Gastrocnemius medialis (tissue), 4 donors: ENCODE measurements at regions of chr21 and their contacts with region 1.

Region 1: GRCh38 chr21:37208056-37208721 is 58.9 kb downstream of the VPS26C start:
- DNase-seq: peak; percentile 83 to 90
- ATAC-seq: peak; percentile 77 to 86
- H3K4me3 ChIP-seq: peak overlapping the region; percentile 33 to 56 (median 49)
- H3K27ac ChIP-seq: peak overlapping the region; percentile 87 to 98 (median 95)
- H3K4me1 ChIP-seq: peaks cover 33 to 44% of the 10 kb centered on the region in 2 donors
- H3K27me3 ChIP-seq: no peaks in the 10 kb centered on the region
- CTCF ChIP-seq: no peak
- POLR2A ChIP-seq: no peak

Region 2: GRCh38 chr21:37166733-37167132 is 41.5 kb before region 1 on chr21:
- in situ Hi-C with region 1: no loop called
- intact Hi-C with region 1: loop called (anchors 5 kb)
- DNase-seq: peak in 1 of 2 donors; percentile 17
- ATAC-seq: peak in 1 of 2 donors; percentile 31
- H3K4me3 ChIP-seq: no peak overlapping the region
- H3K27ac ChIP-seq: peak overlapping the region in 2 of 4 donors; percentile 33 to 37
- H3K4me1 ChIP-seq: peaks cover 5 to 15% of the 10 kb centered on the region in 2 donors
- H3K27me3 ChIP-seq: no peaks in the 10 kb centered on the region
- CTCF ChIP-seq: peak in 3 of 5 experiments; percentile 13 to 52 (median 38)
- POLR2A ChIP-seq: no peak

Region 3: DNA sequence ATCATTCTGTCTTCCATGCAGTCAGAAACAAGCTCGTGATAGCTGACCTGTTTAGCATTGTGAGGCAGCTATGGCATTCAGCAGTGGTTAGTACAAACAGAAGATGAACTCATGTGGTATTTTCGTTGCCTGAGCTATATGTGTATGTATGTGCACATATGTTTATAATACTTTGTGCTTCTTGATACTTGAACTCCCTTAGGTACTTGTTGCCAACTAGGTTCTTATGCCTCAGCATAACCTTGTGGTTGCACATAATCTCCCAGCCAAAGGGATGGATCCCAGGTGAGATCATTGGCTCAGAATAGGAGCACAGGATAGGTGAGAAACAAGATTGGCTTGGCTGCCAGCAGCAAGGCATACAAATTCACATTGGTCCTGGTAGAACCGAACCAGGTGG is 27.1 kb before region 1 on chr21:
- in situ Hi-C with region 1: no loop called
- intact Hi-C with region 1: loop called (anchors 1 kb)
- DNase-seq: peak; percentile 59 to 61
- ATAC-seq: peak; percentile 90 to 98
- H3K4me3 ChIP-seq: peak overlapping the region in 1 of 4 donors; percentile 3
- H3K27ac ChIP-seq: peak overlapping the region; percentile 78 to 85 (median 82)
- H3K4me1 ChIP-seq: no peaks in the 10 kb centered on the region
- H3K27me3 ChIP-seq: no peaks in the 10 kb centered on the region
- CTCF ChIP-seq: no peak
- POLR2A ChIP-seq: no peak

Region 4: DNA sequence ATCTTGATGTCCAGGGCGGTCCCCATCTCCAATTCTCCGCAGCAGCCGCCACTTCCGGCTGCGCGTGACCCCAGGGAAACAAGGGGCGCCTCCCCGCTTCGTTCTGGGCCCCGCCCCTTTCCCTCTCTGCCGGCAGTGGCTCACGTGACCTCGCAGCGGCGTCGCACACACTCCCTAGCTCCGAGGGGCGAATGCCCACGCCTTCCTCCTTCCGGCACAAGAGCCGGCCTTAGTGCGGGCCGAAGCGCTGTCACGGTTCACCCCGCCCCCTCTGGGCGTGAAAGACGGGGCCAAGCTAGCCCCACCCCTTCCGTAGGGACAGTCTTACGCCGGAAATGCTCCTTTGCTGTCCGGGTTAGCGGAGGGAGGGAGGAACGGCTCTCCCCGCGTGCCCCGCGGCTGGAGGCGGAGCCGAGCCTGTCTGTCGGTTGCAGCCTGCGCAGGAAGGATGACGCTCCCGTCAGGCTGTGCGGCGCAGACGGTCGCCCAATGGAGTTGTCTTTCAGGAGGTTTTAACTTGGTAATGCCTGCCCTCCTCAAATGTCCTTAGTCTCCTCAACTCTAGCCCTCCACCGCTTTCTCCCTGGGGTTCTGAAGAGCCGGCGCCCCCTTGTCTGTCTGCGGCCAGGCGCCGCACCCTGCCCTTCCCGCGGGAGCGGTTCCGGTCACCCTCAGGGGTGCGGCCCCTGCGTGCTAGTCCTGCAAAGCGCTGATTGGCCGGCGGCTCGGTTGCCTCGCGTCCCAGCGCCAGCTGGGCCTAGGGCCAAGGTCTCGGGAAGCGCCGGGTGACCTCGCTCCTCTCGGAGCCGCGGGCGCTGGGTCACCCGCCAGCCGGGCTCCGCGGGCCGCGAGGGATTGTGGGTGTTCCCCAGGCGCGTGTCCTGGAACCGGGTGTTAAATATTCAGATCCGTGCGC is 59.3 kb after region 1 on chr21 and contains the start of gene VPS26C:
- in situ Hi-C with region 1: no loop called
- intact Hi-C with region 1: loop called (anchors 1 kb)
- DNase-seq: peak; percentile 97 to 99
- ATAC-seq: peak; percentile 88 to 94
- H3K4me3 ChIP-seq: peak within 1 kb of the TSS; percentile 72 to 90 (median 84)
- H3K27ac ChIP-seq: peak within 1 kb of the TSS; percentile 89 to 97 (median 96)
- H3K4me1 ChIP-seq: peaks cover 37 to 41% of the 10 kb centered on the region in 2 donors
- H3K27me3 ChIP-seq: no peaks in the 10 kb centered on the region
- CTCF ChIP-seq: peak in 1 of 5 experiments; percentile 32
- POLR2A ChIP-seq: peak; percentile 88 to 92
- total RNA-seq, gene VPS26C: 57.6 to 82.7 (median 75.4) TPM

Region 5: DNA sequence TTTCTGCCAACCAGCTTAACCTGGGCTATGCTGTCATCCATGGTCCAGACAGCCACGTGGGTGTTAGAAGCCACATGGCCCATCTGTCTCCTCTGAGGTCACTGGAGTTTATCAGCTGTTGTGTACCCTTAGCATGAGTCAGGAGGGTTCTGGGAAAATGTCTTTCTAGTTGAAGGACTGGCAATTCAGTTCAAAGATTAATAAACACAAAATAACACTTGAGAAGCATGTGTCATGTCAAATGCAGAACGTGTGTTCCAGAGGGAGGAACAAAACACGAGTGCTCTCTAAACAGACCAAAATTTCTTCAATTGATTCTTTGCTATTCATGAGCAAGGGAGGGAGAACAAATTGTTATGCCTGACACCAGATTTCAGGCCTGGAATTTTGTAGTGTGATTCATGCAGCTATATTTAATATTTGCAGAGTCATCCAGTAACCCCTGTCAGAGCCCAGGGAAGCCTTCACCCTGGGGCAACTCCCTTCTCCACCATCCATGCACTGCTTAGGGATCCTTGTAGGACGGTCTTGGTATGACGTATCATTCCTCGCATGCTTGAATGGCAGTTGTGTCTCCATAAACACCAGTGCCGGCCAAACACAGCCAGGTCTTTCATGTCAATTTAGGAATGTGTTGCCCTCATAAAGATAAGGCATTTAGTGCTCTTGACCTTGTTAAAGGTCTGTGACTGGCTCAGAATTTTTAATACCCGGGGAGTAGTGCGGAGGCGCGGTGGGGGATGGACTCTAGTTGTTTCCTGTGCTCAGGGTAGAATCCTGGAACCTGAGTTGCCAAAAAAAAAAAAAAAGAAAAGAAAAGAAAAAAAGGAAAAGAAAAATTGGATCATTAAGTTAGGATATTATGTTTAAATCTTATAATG is 130.7 kb after region 1 on chr21:
- in situ Hi-C with region 1: no loop called
- intact Hi-C with region 1: loop called (anchors 2 kb)
- DNase-seq: peak; percentile 70 to 92
- ATAC-seq: peak; percentile 96 to 97
- H3K4me3 ChIP-seq: peak overlapping the region; percentile 17 to 40 (median 28)
- H3K27ac ChIP-seq: peak overlapping the region; percentile 85 to 92 (median 86)
- H3K4me1 ChIP-seq: peaks cover 10 to 21% of the 10 kb centered on the region in 2 donors
- H3K27me3 ChIP-seq: no peaks in the 10 kb centered on the region
- CTCF ChIP-seq: no peak
- POLR2A ChIP-seq: peak in 1 of 2 donors; percentile 12

Region 6: DNA sequence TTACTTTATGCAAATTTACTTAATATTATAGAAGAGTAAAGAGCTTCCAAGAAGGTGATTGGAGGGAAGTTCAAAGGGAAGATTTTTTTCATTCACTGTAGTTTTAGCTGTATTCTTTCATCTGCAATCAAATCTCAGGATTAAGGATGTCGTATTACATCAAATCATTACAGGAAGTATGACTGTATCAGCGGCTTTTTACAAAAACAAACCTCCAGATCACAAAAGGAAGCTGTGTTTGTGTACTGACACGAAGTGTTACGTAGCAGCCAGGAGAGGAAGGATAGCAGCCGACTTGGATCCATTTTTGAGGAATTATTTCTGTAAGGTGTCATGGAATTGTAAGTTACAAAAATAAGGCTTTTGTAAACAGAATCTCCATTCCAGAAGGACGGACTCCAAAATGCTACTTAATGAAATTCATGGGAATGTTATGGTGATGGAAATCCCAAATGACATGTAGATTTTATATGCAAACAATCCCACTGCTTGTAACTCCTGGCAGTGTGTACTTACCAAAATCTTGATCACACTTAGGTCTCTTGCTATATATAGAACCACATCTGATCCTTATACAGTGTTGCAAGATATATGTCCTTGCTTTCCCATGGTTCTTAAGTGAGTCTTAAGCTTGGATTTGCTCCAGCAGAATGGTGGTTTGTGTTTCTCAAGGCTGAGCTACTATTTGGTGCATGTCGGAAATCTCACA is 1098.4 kb after region 1 on chr21:
- in situ Hi-C with region 1: no loop called
- intact Hi-C with region 1: no loop called
- DNase-seq: no peak
- ATAC-seq: no peak
- H3K4me3 ChIP-seq: no peak overlapping the region
- H3K27ac ChIP-seq: no peak overlapping the region
- H3K4me1 ChIP-seq: no peaks in the 10 kb centered on the region
- H3K27me3 ChIP-seq: no peaks in the 10 kb centered on the region
- CTCF ChIP-seq: no peak
- POLR2A ChIP-seq: no peak